CD4-positive, alpha-beta T cell (primary cell): ENCODE measurements at regions of chr18 and their contacts with region 1.

Region 1: DNA sequence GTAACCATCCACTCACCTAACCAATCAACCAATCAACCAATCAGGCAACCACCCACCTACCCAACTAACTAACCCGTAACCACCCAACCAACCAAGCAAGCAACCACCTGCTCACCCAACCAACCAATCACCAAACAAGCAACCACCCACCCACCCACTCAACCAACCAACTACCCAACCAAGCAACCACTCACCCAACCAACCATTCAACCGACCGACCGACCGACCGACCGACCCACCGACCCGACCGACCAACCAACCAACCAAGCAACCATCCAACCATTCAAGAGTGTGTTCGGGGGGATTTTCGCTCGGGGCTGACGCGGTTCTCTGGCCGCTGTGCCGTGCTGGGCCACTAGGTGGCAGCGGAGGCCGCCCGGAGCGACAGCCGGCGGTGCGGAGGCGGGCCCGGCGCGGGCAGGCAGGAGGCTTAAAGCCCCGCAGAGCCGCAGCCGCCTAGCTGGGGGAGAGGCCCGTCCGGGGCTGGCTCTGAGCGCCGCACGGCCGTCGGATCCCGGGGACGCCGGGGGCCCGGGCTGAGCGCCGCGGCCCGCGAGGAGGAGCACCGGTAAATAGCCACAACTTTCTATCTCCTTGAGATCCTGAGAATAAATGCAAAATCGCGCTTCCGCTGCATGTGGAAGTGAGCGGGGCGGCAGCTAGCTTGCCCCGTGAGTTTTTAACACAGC is at the start of gene MC5R:
- DNase-seq: peak; percentile 31 to 83 (median 62)
- ATAC-seq: peak; percentile 97
- H3K4me3 ChIP-seq: peak within 1 kb of the TSS; percentile 19
- H3K4me3 Mint-ChIP-seq: peak within 1 kb of the TSS; percentile 54
- H3K27ac ChIP-seq: no peak within 1 kb of the TSS
- H3K27ac Mint-ChIP-seq: no peak within 1 kb of the TSS
- H3K4me1 ChIP-seq: peaks cover 7% of the 10 kb centered on the region
- H3K4me1 Mint-ChIP-seq: peaks cover 7% of the 10 kb centered on the region
- H3K27me3 ChIP-seq: peaks cover 10 to 27% of the 10 kb centered on the region in 2 experiments
- H3K27me3 Mint-ChIP-seq: peaks cover 34% of the 10 kb centered on the region
- CTCF ChIP-seq: peak; percentile 73
- total RNA-seq, gene MC5R: not detected

Region 2: GRCh38 chr18:13762690-13763439 is 61.0 kb before region 1 on chr18:
- CTCF ChIA-PET with region 1: no interaction called
- POLR2A ChIA-PET with region 1: no interaction called
- intact Hi-C with region 1: loop called in 1 of 2 experiments (anchors 10 kb)
- DNase-seq: no peak
- ATAC-seq: no peak
- H3K4me3 ChIP-seq: no peak overlapping the region
- H3K4me3 Mint-ChIP-seq: no peak overlapping the region
- H3K27ac ChIP-seq: no peak overlapping the region
- H3K27ac Mint-ChIP-seq: no peak overlapping the region
- H3K4me1 ChIP-seq: no peaks in the 10 kb centered on the region
- H3K4me1 Mint-ChIP-seq: no peaks in the 10 kb centered on the region
- H3K27me3 ChIP-seq: no peaks in the 10 kb centered on the region
- H3K27me3 Mint-ChIP-seq: no peaks in the 10 kb centered on the region
- CTCF ChIP-seq: no peak

Region 3: GRCh38 chr18:13813271-13813849 is 10.5 kb before region 1 on chr18:
- CTCF ChIA-PET with region 1: interaction called, 11 read pairs
- POLR2A ChIA-PET with region 1: no interaction called
- intact Hi-C with region 1: no loop called
- DNase-seq: peak; percentile 16 to 70 (median 46)
- ATAC-seq: peak; percentile 61
- H3K4me3 ChIP-seq: no peak overlapping the region
- H3K4me3 Mint-ChIP-seq: no peak overlapping the region
- H3K27ac ChIP-seq: no peak overlapping the region
- H3K27ac Mint-ChIP-seq: no peak overlapping the region
- H3K4me1 ChIP-seq: no peaks in the 10 kb centered on the region
- H3K4me1 Mint-ChIP-seq: no peaks in the 10 kb centered on the region
- H3K27me3 ChIP-seq: no peaks in the 10 kb centered on the region
- H3K27me3 Mint-ChIP-seq: no peaks in the 10 kb centered on the region
- CTCF ChIP-seq: peak; percentile 90

Region 4: GRCh38 chr18:14086458-14087231 is 262.8 kb after region 1 on chr18:
- CTCF ChIA-PET with region 1: no interaction called
- POLR2A ChIA-PET with region 1: no interaction called
- intact Hi-C with region 1: loop called in 1 of 2 experiments (anchors 10 kb)
- DNase-seq: peak in 3 of 14 experiments; percentile 16 to 20 (median 18)
- ATAC-seq: no peak
- H3K4me3 ChIP-seq: no peak overlapping the region
- H3K4me3 Mint-ChIP-seq: no peak overlapping the region
- H3K27ac ChIP-seq: no peak overlapping the region
- H3K27ac Mint-ChIP-seq: no peak overlapping the region
- H3K4me1 ChIP-seq: no peaks in the 10 kb centered on the region
- H3K4me1 Mint-ChIP-seq: no peaks in the 10 kb centered on the region
- H3K27me3 ChIP-seq: no peaks in the 10 kb centered on the region
- H3K27me3 Mint-ChIP-seq: no peaks in the 10 kb centered on the region
- CTCF ChIP-seq: no peak